Motor neuron (in vitro differentiated cells): ENCODE measurements at regions of chr12 and their contacts with region 1.

Region 1: GRCh38 chr12:92034858-92035401 is 110.7 kb downstream of the BTG1 start:
- ATAC-seq: peak; percentile 73 to 92 (median 83)
- H3K4me3 ChIP-seq: peak overlapping the region in 2 of 5 donors; percentile 3 to 11
- H3K27ac ChIP-seq: no peak overlapping the region
- H3K4me1 ChIP-seq: peaks cover 38 to 46% of the 10 kb centered on the region in 2 donors

Region 2: GRCh38 chr12:91551927-91552326 is 483.0 kb before region 1 on chr12:
- in situ Hi-C with region 1: no loop called
- ATAC-seq: no peak
- H3K4me3 ChIP-seq: no peak overlapping the region
- H3K27ac ChIP-seq: no peak overlapping the region
- H3K4me1 ChIP-seq: peaks cover 18 to 24% of the 10 kb centered on the region in 2 donors

Region 3: DNA sequence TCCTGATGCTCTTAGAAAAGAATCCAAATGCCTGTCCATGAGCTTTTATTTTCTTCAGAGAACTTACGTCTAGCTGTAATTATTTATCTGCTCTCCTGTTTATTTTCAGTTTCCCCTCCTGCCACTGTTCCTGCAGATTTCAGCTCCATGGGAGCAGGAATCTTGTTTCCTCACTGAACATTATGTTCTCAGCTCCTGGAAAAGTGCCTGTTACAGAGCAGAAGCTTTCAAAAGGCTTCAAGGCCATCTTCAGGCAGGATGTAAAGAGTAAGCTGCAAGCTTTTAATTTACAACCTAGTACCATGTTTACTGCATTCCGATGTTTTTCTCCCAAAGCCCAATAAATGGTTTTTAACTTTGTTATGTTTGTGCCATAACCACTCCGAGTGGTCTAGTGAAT is 209.1 kb after region 1 on chr12:
- in situ Hi-C with region 1: loop called in 1 of 9 experiments (anchors 25 kb)
- ATAC-seq: peak in 1 of 8 experiments; percentile 61
- H3K4me3 ChIP-seq: no peak overlapping the region
- H3K27ac ChIP-seq: no peak overlapping the region
- H3K4me1 ChIP-seq: peaks cover 3 to 4% of the 10 kb centered on the region in 2 donors